ENCODE measurements at regions of chr6 and their contacts with region 1.

Region 1: GRCh38 chr6:11770546-11771466 is 7.8 kb downstream of the ADTRP start:
- DNase-seq: peak; percentile 95 to 96
- ATAC-seq: peak; percentile 94
- H3K4me3 ChIP-seq: no peak overlapping the region
- H3K27ac ChIP-seq: peak overlapping the region in 1 of 2 donors; percentile 93
- H3K4me1 ChIP-seq: peaks cover under 1 to 4% of the 10 kb centered on the region in 2 donors
- H3K27me3 ChIP-seq: no peaks in the 10 kb centered on the region

Region 2: GRCh38 chr6:11711003-11711983 is 59.5 kb before region 1 on chr6:
- intact Hi-C with region 1: loop called in 1 of 2 experiments (anchors 2 kb)
- DNase-seq: no peak
- ATAC-seq: peak; percentile 45
- H3K4me3 ChIP-seq: no peak overlapping the region
- H3K27ac ChIP-seq: no peak overlapping the region
- H3K4me1 ChIP-seq: peaks cover 0 to 3% of the 10 kb centered on the region in 2 donors
- H3K27me3 ChIP-seq: no peaks in the 10 kb centered on the region

Region 3: GRCh38 chr6:11732036-11732631 is 38.7 kb before region 1 on chr6:
- intact Hi-C with region 1: loop called in 1 of 2 experiments (anchors 5 kb)
- DNase-seq: peak; percentile 90 to 93
- ATAC-seq: peak; percentile 88
- H3K4me3 ChIP-seq: no peak overlapping the region
- H3K27ac ChIP-seq: peak overlapping the region; percentile 80 to 87
- H3K4me1 ChIP-seq: no peaks in the 10 kb centered on the region
- H3K27me3 ChIP-seq: no peaks in the 10 kb centered on the region

Region 4: DNA sequence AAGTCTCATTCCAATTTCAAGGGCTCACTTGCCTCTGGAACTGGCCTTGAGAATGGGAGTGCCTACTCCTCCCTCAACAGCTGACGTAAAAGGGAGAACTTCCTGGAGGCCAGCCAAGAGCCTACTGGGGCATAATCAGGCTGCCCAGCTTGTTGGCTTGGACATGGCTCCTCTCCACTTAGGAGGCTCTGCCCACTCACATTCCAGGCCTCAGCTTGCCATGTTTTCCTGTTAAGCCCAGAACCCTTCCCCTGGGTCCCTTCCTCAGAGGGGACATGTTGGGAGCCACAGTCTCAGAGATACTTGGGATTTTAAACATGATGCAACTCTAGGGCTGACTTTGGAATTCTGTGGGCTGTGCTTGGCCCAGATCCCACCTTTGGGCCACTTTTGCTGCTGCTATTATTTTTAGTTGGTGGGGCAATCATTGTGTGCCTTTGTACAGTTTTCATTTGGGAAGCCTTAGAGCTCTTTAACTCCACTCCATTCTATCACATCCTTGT is 39.3 kb after region 1 on chr6:
- intact Hi-C with region 1: loop called (anchors 5 kb)
- DNase-seq: peak; percentile 88 to 92
- ATAC-seq: peak; percentile 76
- H3K4me3 ChIP-seq: no peak overlapping the region
- H3K27ac ChIP-seq: peak overlapping the region in 1 of 2 donors; percentile 65
- H3K4me1 ChIP-seq: peaks cover 2 to 3% of the 10 kb centered on the region in 2 donors
- H3K27me3 ChIP-seq: no peaks in the 10 kb centered on the region